SK-N-SH (cell line): ENCODE measurements at regions of chr17 and their contacts with region 1.

Region 1: GRCh38 chr17:6421700-6422604 is 13.0 kb downstream of the AIPL1 start:
- DNase-seq: peak; percentile 89
- H3K4me3 ChIP-seq: no peak overlapping the region; a peak in 1 of 4 replicates
- H3K27ac ChIP-seq: no peak overlapping the region
- H3K4me1 ChIP-seq: no peaks in the 10 kb centered on the region
- H3K27me3 ChIP-seq: peaks cover 55% of the 10 kb centered on the region
- CTCF ChIP-seq: peak; percentile 84
- EP300 ChIP-seq: no peak
- RAD21 ChIP-seq: peak; percentile 93

Region 2: DNA sequence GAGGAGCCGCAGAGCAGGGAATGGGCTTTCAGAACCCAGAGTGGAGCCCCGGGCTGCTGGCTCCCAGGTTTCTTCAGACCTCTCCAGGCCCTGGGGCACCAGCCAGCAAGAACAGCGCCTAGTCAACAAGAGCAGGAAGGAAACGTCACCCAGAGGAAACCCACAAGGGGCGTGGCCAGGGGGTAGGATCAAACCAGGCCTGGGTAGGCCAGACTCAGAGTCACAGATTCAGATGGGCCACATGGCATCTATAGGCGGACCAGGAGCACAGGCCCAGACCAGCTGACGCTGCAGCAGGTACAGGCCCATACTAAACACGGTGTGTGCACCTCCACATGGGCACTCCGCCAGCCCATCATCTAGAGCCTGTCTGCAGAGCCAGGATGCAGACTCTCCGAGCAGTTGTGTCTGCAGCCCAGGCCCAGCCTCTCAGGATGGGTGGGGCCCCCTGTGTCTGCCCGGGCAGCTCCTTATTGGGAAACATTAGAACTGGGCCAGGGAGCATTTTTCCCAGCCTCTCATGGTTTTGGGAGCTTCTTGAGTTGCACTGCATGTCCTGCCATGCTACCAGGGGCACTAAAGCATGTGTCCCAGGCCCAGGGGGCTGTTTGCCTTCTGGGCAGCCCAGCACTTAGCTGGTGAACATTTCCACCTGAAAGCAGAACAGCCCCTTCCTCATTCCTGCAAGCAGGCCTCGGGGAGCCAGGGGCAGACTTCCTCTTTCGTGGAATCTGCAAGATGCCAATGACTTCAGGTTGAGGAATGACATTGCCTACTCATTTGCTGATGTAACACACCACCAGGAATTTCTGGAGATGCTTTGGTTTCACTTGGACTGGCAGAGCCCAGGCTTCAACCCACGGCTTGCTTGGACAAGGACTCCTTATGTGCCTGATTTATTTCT is 837.3 kb before region 1 on chr17 and contains the start of gene NLRP1:
- CTCF ChIA-PET with region 1: interaction called, 13 read pairs
- POLR2A ChIA-PET with region 1: no interaction called
- DNase-seq: peak; percentile 35
- H3K4me3 ChIP-seq: peak within 1 kb of the TSS; percentile 34 to 61; a peak in 3 of 4 replicates
- H3K27ac ChIP-seq: peak within 1 kb of the TSS; percentile 51 to 86; a peak in 3 of 4 replicates
- H3K4me1 ChIP-seq: peaks cover 0 to 20% of the 10 kb centered on the region in 2 experiments; a peak in 3 of 4 replicates
- H3K27me3 ChIP-seq: no peaks in the 10 kb centered on the region
- CTCF ChIP-seq: no peak
- EP300 ChIP-seq: no peak
- RAD21 ChIP-seq: no peak
- polyA plus RNA-seq, gene NLRP1: 51.4 and 53.0 TPM in 2 replicates

Region 3: GRCh38 chr17:5592382-5592781 is 829.6 kb before region 1 on chr17:
- CTCF ChIA-PET with region 1: interaction called, 14 read pairs
- POLR2A ChIA-PET with region 1: no interaction called
- DNase-seq: peak; percentile 24
- H3K4me3 ChIP-seq: peak overlapping the region in 1 of 2 experiments; percentile 14; a peak in 1 of 4 replicates
- H3K27ac ChIP-seq: no peak overlapping the region
- H3K4me1 ChIP-seq: no peaks in the 10 kb centered on the region
- H3K27me3 ChIP-seq: no peaks in the 10 kb centered on the region; the same call in 1 of the 2 replicates
- CTCF ChIP-seq: peak; percentile 70
- EP300 ChIP-seq: no peak
- RAD21 ChIP-seq: peak; percentile 58

Region 4: GRCh38 chr17:6435968-6436367 is 14.0 kb after region 1 on chr17:
- CTCF ChIA-PET with region 1: interaction called, 13 read pairs
- POLR2A ChIA-PET with region 1: no interaction called
- DNase-seq: peak; percentile 84
- H3K4me3 ChIP-seq: no peak overlapping the region; a peak in 1 of 4 replicates
- H3K27ac ChIP-seq: no peak overlapping the region
- H3K4me1 ChIP-seq: no peaks in the 10 kb centered on the region
- H3K27me3 ChIP-seq: peaks cover 15% of the 10 kb centered on the region; the same call in 1 of the 2 replicates
- CTCF ChIP-seq: peak; percentile 74
- EP300 ChIP-seq: no peak
- RAD21 ChIP-seq: peak; percentile 82

Region 5: DNA sequence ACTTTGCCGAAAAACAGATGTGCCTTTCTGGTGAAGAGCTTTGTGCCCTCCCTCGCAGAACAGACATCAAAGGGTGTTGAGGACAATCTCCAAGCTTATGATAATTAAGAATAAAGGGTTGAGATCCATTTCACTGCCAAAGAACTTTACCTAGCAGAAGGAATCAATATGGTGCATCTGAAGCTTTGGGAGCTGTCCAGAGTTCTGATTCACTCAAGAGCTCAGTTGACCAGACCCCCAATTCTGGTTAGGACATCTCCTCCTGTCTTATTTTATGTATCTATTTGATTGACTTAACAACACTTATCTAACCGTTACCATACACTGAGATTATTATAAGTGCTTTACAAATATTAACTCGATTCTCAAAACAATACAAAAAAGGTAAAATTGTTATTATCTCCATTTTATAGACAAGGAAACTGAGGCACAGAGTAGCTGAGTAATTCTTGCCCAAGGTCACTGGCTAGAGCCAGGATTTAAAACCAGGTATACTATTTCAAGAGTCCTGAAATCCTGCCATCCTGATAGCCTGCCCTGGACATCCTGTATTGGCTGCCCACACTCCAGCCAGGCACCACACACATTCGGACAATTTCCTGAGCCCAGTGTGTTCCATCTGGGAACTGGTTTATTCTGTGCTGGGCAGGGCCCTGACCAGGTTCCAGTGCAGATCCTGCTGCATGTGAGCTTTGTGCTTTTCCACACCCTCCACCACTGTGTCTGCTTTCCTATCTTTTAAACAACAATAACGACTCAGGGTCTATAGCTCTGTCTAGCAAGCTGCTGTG is 104.6 kb after region 1 on chr17:
- CTCF ChIA-PET with region 1: no interaction called
- POLR2A ChIA-PET with region 1: no interaction called
- DNase-seq: no peak
- H3K4me3 ChIP-seq: no peak overlapping the region
- H3K27ac ChIP-seq: no peak overlapping the region
- H3K4me1 ChIP-seq: no peaks in the 10 kb centered on the region
- H3K27me3 ChIP-seq: no peaks in the 10 kb centered on the region
- CTCF ChIP-seq: no peak
- EP300 ChIP-seq: no peak
- RAD21 ChIP-seq: no peak

Region 6: GRCh38 chr17:6681671-6682070 is 259.7 kb after region 1 on chr17:
- CTCF ChIA-PET with region 1: no interaction called
- POLR2A ChIA-PET with region 1: no interaction called
- DNase-seq: no peak
- H3K4me3 ChIP-seq: no peak overlapping the region
- H3K27ac ChIP-seq: no peak overlapping the region
- H3K4me1 ChIP-seq: no peaks in the 10 kb centered on the region
- H3K27me3 ChIP-seq: peaks cover 85% of the 10 kb centered on the region
- CTCF ChIP-seq: no peak
- EP300 ChIP-seq: no peak
- RAD21 ChIP-seq: no peak